GM12878 (cell line): ENCODE measurements at regions of chr3 and their contacts with region 1.

Region 1: GRCh38 chr3:130539005-130539404 is 22.0 kb downstream of the COL6A6 start:
- DNase-seq: no peak
- ATAC-seq: peak; percentile 92
- H3K4me3 ChIP-seq: no peak overlapping the region
- H3K27ac ChIP-seq: no peak overlapping the region
- H3K4me1 ChIP-seq: no peaks in the 10 kb centered on the region
- H3K27me3 ChIP-seq: no peaks in the 10 kb centered on the region; a peak in 1 of 4 replicates
- CTCF ChIP-seq: peak; percentile 67 to 74 (median 68)
- EP300 ChIP-seq: no peak
- POLR2A ChIP-seq: no peak
- RAD21 ChIP-seq: peak; percentile 56

Region 2: DNA sequence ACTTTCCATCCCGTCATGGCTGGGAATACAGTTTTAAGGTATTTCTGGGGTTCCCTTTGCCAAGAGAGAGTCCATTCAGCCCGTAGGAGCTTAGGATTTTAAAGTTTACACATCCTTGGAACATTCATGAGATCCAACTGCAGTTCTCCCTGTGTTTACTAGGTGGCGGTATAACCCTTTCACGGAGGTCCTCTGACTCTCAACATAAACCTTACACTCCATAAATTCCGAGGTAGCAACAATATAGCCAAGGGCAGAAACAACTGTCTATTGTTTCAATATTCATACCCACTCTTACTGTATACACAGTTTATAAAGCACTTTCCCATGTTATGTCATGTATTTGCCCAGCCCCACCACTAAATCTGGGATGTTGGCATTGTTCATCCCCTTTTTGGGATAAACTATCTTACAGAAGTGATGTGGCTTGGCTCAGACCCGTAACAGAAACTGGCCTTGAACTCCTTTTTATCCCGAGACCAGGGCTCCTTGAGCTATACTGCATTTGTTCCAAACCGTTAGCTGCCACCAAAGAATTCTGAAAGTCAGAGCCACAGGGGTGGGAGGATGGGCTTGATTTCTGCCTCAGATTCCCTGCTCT is 262.7 kb before region 1 on chr3:
- CTCF ChIA-PET with region 1: interaction called, 49 read pairs
- POLR2A ChIA-PET with region 1: no interaction called
- RAD21 ChIA-PET with region 1: interaction called, 7 read pairs
- SMC1A ChIA-PET with region 1: interaction called, 16 read pairs
- in situ Hi-C with region 1: loop called (anchors 5 kb)
- intact Hi-C with region 1: loop called (anchors 1 kb)
- DNase-seq: no peak
- ATAC-seq: peak; percentile 84
- H3K4me3 ChIP-seq: no peak overlapping the region
- H3K27ac ChIP-seq: no peak overlapping the region
- H3K4me1 ChIP-seq: no peaks in the 10 kb centered on the region
- H3K27me3 ChIP-seq: no peaks in the 10 kb centered on the region
- CTCF ChIP-seq: peak; percentile 82 to 89 (median 84)
- EP300 ChIP-seq: no peak
- POLR2A ChIP-seq: no peak
- RAD21 ChIP-seq: peak; percentile 84

Region 3: GRCh38 chr3:130746246-130747039 is 207.4 kb after region 1 on chr3 and contains the start of gene PIK3R4:
- CTCF ChIA-PET with region 1: no interaction called
- POLR2A ChIA-PET with region 1: no interaction called
- RAD21 ChIA-PET with region 1: no interaction called
- SMC1A ChIA-PET with region 1: no interaction called
- in situ Hi-C with region 1: no loop called
- intact Hi-C with region 1: no loop called
- DNase-seq: peak; percentile 95
- ATAC-seq: peak; percentile 87
- H3K4me3 ChIP-seq: peak within 1 kb of the TSS; percentile 85
- H3K27ac ChIP-seq: peak within 1 kb of the TSS; percentile 87
- H3K4me1 ChIP-seq: peaks cover 4% of the 10 kb centered on the region; the same call in 1 of the 2 replicates
- H3K27me3 ChIP-seq: no peaks in the 10 kb centered on the region
- CTCF ChIP-seq: no peak
- EP300 ChIP-seq: no peak
- POLR2A ChIP-seq: peak; percentile 80
- RAD21 ChIP-seq: no peak
- polyA plus RNA-seq, gene PIK3R4: 22.6 to 35.8 TPM